Panc1 (cell line): ENCODE measurements at regions of chr9 and their contacts with region 1.

Region 1: DNA sequence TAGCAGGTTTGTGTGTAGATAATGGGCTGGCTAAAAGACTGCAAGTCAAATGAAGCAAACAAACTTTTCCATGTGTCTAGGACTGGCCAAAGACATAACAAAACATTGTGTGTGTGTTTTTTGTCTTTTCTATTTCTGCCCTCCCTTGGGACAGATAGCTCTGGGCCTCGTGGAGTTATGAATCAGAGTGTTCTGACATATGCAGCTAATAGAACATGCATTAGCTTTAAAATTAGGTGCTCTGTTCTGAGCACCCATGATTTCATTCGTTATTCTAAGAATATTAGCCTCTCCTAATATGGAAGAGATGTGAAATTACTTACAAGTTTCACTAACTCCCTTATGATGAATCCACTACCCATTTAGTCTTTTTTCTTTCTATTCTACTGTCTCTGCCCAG is 367.3 kb upstream of the PAPPA start:
- DNase-seq: no peak
- ATAC-seq: no peak
- H3K4me3 ChIP-seq: no peak overlapping the region
- H3K27ac ChIP-seq: no peak overlapping the region
- H3K4me1 ChIP-seq: no peaks in the 10 kb centered on the region
- H3K27me3 ChIP-seq: no peaks in the 10 kb centered on the region
- CTCF ChIP-seq: no peak

Region 2: DNA sequence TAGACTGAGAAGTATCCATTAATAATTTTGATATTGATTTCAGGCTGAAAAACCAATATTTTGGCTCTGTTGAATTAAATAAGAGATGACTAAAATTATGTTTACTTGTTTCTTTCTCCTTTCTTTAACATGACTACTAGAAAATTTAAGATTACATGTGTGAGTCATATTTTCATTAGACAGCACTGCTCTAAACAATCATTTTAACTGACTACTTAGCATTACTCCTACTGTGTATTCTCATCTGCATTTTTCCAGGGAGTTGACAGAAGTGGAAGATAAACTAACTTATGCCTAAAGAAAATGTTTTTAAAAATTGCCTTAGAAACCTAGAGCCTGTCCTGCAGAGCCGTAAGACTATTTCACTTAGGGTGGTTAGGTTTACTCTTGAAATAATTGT is 697.5 kb before region 1 on chr9:
- CTCF ChIA-PET with region 1: no interaction called
- POLR2A ChIA-PET with region 1: no interaction called
- in situ Hi-C with region 1: no loop called
- intact Hi-C with region 1: no loop called
- DNase-seq: no peak
- ATAC-seq: no peak
- H3K4me3 ChIP-seq: no peak overlapping the region
- H3K27ac ChIP-seq: no peak overlapping the region
- H3K4me1 ChIP-seq: no peaks in the 10 kb centered on the region
- H3K27me3 ChIP-seq: no peaks in the 10 kb centered on the region
- CTCF ChIP-seq: no peak

Region 3: DNA sequence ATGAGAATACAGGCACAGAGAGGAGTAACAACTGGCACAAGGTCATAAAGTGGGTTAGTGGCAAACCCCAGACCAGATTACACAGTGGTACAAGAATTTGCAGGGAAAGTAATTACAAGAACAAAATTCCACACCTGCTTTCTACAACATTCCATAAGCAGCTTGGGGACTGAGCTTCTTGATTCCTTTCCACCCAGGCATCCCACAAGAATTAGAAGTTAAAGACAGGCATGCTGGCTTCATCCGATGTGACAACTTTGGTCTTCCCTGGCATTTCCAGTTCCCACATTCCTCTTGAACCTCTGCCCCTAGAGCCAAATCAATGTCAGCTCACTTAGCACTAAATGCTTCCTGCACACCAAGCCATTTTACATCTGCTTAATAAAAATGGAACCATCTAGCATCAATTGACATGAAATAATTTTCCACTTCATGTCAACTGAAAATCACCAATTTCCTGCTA is 68.6 kb before region 1 on chr9:
- CTCF ChIA-PET with region 1: no interaction called
- POLR2A ChIA-PET with region 1: no interaction called
- in situ Hi-C with region 1: no loop called
- intact Hi-C with region 1: loop called (anchors 10 kb)
- DNase-seq: no peak
- ATAC-seq: no peak
- H3K4me3 ChIP-seq: no peak overlapping the region
- H3K27ac ChIP-seq: no peak overlapping the region
- H3K4me1 ChIP-seq: no peaks in the 10 kb centered on the region
- H3K27me3 ChIP-seq: no peaks in the 10 kb centered on the region
- CTCF ChIP-seq: no peak

Region 4: DNA sequence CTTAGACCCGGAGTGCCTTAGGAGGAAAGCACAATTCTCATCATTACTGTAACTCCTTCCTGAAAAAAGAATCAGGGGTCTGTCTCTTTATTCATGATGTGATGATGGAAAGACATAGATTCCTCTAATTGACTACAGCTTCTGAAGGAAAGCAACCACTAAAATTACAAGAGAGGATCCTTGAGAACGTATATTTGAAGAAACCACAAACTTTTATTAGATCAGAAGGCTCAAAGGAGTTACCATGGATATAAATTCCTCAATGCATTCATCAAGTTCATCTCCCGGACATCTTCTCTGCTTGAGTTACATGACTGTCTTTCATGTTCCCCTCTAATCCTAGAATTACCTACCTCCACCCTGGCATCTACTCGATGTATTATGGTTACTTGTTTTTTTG is 263.1 kb after region 1 on chr9:
- CTCF ChIA-PET with region 1: no interaction called
- POLR2A ChIA-PET with region 1: no interaction called
- in situ Hi-C with region 1: no loop called
- intact Hi-C with region 1: no loop called
- DNase-seq: no peak
- ATAC-seq: no peak
- H3K4me3 ChIP-seq: no peak overlapping the region
- H3K27ac ChIP-seq: no peak overlapping the region
- H3K4me1 ChIP-seq: no peaks in the 10 kb centered on the region
- H3K27me3 ChIP-seq: no peaks in the 10 kb centered on the region
- CTCF ChIP-seq: no peak